ENCODE measurements at regions of chr1 and their contacts with region 1.

Region 1: DNA sequence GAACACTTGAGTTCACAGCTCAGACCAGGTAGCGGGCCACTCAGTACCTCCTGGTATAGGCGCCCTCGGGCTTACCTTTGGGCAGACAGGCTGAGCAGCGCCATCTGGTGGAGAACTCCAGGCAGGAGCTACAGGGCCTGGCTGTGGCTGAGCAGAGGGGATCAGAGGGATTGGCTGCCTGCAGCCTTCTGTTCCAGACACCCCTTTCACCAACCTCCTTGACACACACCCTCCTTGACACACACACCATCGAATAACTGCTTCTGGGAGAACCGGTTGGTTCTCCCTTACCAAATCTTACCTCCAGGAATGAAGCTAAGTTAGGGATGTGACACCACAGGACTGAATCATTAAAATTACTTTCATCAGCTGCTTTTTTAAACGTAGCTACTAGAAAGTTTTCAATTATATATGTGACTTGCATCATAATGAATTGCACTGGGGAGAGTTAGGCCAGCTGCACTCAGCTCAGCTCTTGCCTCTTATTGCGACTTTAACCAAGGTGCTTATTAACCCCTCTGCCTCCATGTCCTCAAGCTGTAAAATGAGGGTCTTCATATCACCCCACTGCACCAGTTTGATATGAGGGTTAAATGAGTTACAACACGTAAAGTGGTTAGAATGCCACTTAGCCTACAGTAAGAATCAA is 6.6 kb downstream of the LIN28A start:
- DNase-seq: peak; percentile 57
- H3K4me3 ChIP-seq: no peak overlapping the region
- H3K27ac ChIP-seq: no peak overlapping the region
- H3K4me1 ChIP-seq: no peaks in the 10 kb centered on the region
- H3K27me3 ChIP-seq: peaks cover 39 to 40% of the 10 kb centered on the region in 2 experiments
- CTCF ChIP-seq: peak; percentile 82 to 99
- POLR2A ChIP-seq: no peak

Region 2: GRCh38 chr1:26035959-26036755 is 381.1 kb before region 1 on chr1:
- CTCF ChIA-PET with region 1: interaction called, 26 read pairs
- POLR2A ChIA-PET with region 1: no interaction called
- dilution Hi-C with region 1: no loop called
- intact Hi-C with region 1: loop called (anchors 2 kb)
- DNase-seq: peak; percentile 74
- H3K4me3 ChIP-seq: peak overlapping the region; percentile 65 to 85 (median 81)
- H3K27ac ChIP-seq: no peak overlapping the region
- H3K4me1 ChIP-seq: peaks cover 15% of the 10 kb centered on the region
- H3K27me3 ChIP-seq: peaks cover 0 to 3% of the 10 kb centered on the region in 2 experiments
- CTCF ChIP-seq: peak; percentile 98 to 99
- POLR2A ChIP-seq: no peak

Region 3: GRCh38 chr1:26279456-26280332 is 137.5 kb before region 1 on chr1 and contains the start of gene SH3BGRL3:
- CTCF ChIA-PET with region 1: interaction called, 43 read pairs
- POLR2A ChIA-PET with region 1: no interaction called
- dilution Hi-C with region 1: no loop called
- intact Hi-C with region 1: no loop called
- DNase-seq: peak; percentile 89
- H3K4me3 ChIP-seq: peak within 1 kb of the TSS; percentile 54 to 95 (median 69)
- H3K27ac ChIP-seq: peak within 1 kb of the TSS; percentile 82
- H3K4me1 ChIP-seq: peaks cover 52% of the 10 kb centered on the region
- H3K27me3 ChIP-seq: no peaks in the 10 kb centered on the region
- CTCF ChIP-seq: peak; percentile 50 to 69
- POLR2A ChIP-seq: peak; percentile 97
- total RNA-seq, gene SH3BGRL3: 337 and 344 TPM in 2 replicates

Region 4: GRCh38 chr1:26358411-26359384 is 58.5 kb before region 1 on chr1:
- CTCF ChIA-PET with region 1: interaction called, 25 read pairs
- POLR2A ChIA-PET with region 1: no interaction called
- dilution Hi-C with region 1: no loop called
- intact Hi-C with region 1: no loop called
- DNase-seq: no peak
- H3K4me3 ChIP-seq: no peak overlapping the region
- H3K27ac ChIP-seq: no peak overlapping the region
- H3K4me1 ChIP-seq: no peaks in the 10 kb centered on the region
- H3K27me3 ChIP-seq: peaks cover 23 to 25% of the 10 kb centered on the region in 2 experiments
- CTCF ChIP-seq: no peak
- POLR2A ChIP-seq: no peak

Region 5: DNA sequence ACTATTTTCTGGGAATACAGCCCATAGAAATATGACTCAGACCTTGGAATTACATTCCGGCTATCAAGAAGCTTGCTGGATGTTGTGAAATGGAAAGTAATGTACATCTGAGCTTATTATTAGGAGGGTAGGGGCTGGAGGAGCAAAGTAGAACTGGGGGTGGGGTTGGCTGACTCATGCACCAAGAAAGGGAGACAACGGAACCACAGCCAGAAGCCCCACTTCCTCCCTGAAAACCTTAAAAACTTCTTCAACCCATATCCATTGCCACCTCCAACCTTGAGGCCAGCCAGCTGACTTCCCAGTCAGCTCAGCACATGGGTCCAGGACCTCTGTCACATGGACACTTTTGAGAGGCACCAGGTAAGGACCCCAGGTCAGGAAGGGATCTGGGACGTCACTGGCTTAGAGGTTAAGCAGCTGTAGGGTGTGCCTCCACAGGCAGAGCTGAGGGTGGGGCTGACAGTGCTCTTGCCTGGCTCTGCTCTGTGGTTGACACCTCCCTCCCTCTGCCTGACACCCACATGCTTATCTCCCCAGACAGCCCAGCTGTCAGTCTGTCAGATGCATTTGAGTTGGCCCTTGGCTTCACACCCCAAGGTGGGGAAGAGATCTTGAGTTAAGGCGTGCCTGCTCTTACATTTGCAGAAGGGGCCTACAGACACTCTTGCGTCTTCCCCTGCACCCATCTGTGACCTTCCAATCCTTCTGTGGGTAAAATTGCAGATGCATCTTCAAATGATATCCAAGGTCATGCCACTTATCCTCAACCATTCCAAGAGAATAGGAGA is 39.0 kb before region 1 on chr1:
- CTCF ChIA-PET with region 1: interaction called, 13 read pairs
- POLR2A ChIA-PET with region 1: no interaction called
- dilution Hi-C with region 1: no loop called
- intact Hi-C with region 1: no loop called
- DNase-seq: peak; percentile 53
- H3K4me3 ChIP-seq: no peak overlapping the region
- H3K27ac ChIP-seq: no peak overlapping the region
- H3K4me1 ChIP-seq: peaks cover 4% of the 10 kb centered on the region
- H3K27me3 ChIP-seq: peaks cover 0 to 3% of the 10 kb centered on the region in 2 experiments
- CTCF ChIP-seq: no peak
- POLR2A ChIP-seq: no peak

Region 6: GRCh38 chr1:26431979-26432695 is 14.9 kb after region 1 on chr1 and contains the start of gene DHDDS:
- CTCF ChIA-PET with region 1: interaction called, 26 read pairs
- POLR2A ChIA-PET with region 1: no interaction called
- dilution Hi-C with region 1: no loop called
- intact Hi-C with region 1: no loop called
- DNase-seq: peak; percentile 99
- H3K4me3 ChIP-seq: peak within 1 kb of the TSS; percentile 52 to 92 (median 75)
- H3K27ac ChIP-seq: peak within 1 kb of the TSS; percentile 54
- H3K4me1 ChIP-seq: peaks cover 20% of the 10 kb centered on the region
- H3K27me3 ChIP-seq: peaks cover 1 to 3% of the 10 kb centered on the region in 2 experiments
- CTCF ChIP-seq: no peak
- POLR2A ChIP-seq: peak; percentile 83
- total RNA-seq, gene DHDDS: 60.3 and 70.7 TPM in 2 replicates